Transverse colon (tissue), 4 donors: ENCODE measurements at regions of chr1 and their contacts with region 1.

Region 1: DNA sequence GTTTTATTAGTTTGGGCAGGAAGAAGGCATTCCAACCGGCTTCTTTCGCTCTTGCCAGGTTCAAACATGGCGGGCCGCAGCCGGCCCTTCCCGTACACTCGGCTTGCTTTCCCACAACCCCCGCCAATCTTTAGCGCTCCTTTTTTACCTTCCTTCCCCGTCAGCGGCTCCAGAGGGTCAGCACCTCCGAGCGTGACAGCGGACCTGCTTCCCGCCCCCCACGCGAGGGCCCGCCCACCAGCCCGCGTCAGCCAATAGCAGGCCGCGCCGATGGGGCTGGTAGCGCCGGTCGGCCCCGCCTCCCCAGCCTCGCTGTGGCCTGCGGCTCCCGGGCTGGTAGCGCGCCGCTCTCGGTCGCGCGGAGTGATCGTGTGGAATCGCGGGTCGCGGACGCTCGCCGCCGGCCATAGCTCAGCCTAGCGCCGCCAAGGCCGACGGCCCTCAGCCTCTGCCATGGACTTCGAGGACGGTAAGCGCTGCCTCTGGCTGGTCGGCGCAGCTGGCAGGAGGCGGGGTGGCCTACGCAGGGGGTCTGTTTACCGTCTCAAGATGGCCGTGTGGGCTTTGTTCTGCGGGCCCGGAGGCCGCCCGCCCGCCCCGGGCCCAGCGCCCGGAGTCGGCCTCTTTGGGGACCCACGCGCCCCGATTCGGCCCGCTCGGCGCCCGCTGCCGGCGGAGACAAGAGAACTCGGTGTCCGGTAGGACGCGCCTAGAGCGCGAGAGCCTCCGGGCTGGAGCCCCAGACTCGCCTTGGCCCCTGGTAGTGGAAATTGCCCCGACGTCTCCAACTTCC is at the start of gene ZNF326:
- DNase-seq: peak; percentile 97
- H3K4me3 ChIP-seq: peak within 1 kb of the TSS; percentile 67 to 99 (median 84)
- H3K27ac ChIP-seq: peak within 1 kb of the TSS; percentile 97 to 99 (median 97)
- H3K4me1 ChIP-seq: peaks cover 13 to 70% (median 46%) of the 10 kb centered on the region in 4 donors
- H3K27me3 ChIP-seq: no peaks in the 10 kb centered on the region
- CTCF ChIP-seq: no peak
- EP300 ChIP-seq: no peak
- POLR2A ChIP-seq: peak; percentile 98
- total RNA-seq, gene ZNF326: 32.4 to 59.1 (median 39.9) TPM

Region 2: DNA sequence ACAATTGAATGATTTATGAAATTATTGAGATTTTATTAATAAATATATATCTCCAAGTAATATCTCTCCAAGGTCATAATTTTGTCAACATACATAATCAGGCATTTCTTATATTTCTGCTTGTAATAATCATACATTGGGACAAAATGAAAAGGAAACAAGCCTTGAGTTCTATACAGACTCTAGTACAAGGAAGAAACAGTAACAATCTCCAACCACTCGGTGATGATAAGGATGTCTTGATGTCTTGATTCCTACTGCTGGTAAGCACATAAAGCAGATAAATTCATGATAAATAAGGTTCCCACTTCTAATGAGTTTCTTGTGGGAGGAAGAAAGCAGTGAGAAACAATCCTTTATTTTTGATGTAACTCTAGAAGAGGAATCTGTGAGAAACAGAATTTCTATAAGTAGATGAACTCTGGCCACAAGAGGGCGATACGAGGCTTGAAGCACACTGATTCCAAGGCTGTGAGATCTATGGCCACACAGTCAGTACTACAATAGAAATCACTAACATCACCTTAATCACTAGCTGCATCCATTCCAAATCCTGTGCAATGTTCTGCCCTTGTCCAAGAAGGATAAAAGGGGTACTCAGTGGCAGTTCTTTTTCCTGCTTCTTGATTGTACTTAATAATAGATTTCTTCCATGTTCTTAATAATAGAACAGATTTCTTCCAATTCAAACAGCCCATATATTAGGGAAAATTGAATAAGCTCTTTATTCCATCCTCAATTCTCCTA is 511.8 kb before region 1 on chr1:
- in situ Hi-C with region 1: loop called in 1 of 4 experiments (anchors 25 kb)
- intact Hi-C with region 1: no loop called
- DNase-seq: peak; percentile 79
- H3K4me3 ChIP-seq: no peak overlapping the region
- H3K27ac ChIP-seq: no peak overlapping the region
- H3K4me1 ChIP-seq: no peaks in the 10 kb centered on the region
- H3K27me3 ChIP-seq: no peaks in the 10 kb centered on the region
- CTCF ChIP-seq: peak; percentile 54 to 74 (median 72)
- EP300 ChIP-seq: no peak
- POLR2A ChIP-seq: no peak

Region 3: GRCh38 chr1:89524369-89525168 is 470.4 kb before region 1 on chr1 and contains the start of gene LRRC8B:
- in situ Hi-C with region 1: loop called in 1 of 4 experiments (anchors 25 kb)
- intact Hi-C with region 1: no loop called
- DNase-seq: peak; percentile 93
- H3K4me3 ChIP-seq: peak within 1 kb of the TSS; percentile 65 to 96 (median 70)
- H3K27ac ChIP-seq: peak within 1 kb of the TSS; percentile 79 to 94 (median 90)
- H3K4me1 ChIP-seq: peaks cover 0 to 32% (median 10%) of the 10 kb centered on the region in 4 donors
- H3K27me3 ChIP-seq: no peaks in the 10 kb centered on the region
- CTCF ChIP-seq: peak in 1 of 5 experiments; percentile 26
- EP300 ChIP-seq: no peak
- POLR2A ChIP-seq: peak; percentile 67
- total RNA-seq, gene LRRC8B: 7.0 to 10.5 (median 8.7) TPM

Region 4: GRCh38 chr1:89632657-89633247 is 362.2 kb before region 1 on chr1 and contains the start of gene LRRC8C:
- in situ Hi-C with region 1: loop called in 1 of 4 experiments (anchors 25 kb)
- intact Hi-C with region 1: no loop called
- DNase-seq: peak; percentile 84
- H3K4me3 ChIP-seq: peak within 1 kb of the TSS; percentile 60 to 85 (median 82)
- H3K27ac ChIP-seq: peak within 1 kb of the TSS; percentile 84 to 87 (median 84)
- H3K4me1 ChIP-seq: peaks cover 0 to 17% (median 14%) of the 10 kb centered on the region in 4 donors
- H3K27me3 ChIP-seq: peaks cover 7% of the 10 kb centered on the region
- CTCF ChIP-seq: peak in 2 of 5 experiments; percentile 18 to 26
- EP300 ChIP-seq: no peak
- POLR2A ChIP-seq: peak; percentile 17
- total RNA-seq, gene LRRC8C: 2.4 to 4.4 (median 2.7) TPM